Activated T-helper 1 cell treated with anti-CD3 and anti-CD28 coated beads, Interleukin-12 subunit alpha, Interleukin-12 subunit beta, Interleukin-2, Interleukin-4 antibody, amounts not matched to agents 30 ng/mL and 10 ng/mL and 1 ng/mL, durations not matched to agents 14 hours and 24 hours and 36 hours (primary cell): ENCODE measurements at regions of chr20 and their contacts with region 1.

Region 1: DNA sequence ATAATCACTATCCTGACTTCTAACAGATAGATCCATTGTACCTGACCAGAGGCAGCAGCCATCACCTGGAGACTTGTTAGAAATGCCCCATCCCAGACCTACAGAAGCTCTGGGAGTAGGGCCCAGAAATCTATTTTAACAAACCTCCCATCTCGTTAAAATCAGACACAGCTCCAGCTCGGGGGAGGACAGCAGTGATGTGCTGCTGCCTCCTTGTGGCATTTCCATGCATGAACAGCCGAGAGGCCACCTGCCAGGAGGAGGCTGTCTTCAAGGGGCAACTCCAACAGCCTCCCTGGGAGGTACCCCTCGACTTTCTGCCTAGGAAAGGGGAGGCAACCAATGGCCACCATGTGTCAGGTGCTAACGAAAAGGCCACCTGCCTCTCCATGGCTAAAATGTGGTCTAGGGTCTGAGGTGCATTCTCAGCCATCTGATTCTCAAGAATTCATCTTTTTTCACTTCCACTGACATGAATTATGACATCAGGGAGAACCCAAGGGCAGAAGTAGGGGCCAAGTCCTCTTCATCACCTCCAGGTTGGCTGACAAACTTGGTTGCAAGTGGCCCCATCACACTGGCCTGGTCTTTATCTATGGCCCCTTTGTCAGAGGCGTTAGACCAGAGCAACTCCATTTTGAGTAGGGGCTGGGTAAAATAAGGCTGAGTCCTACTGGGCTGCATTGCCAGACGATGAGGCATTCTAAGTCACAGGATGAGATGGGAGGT is 12.2 kb upstream of the KCNK15 start:
- DNase-seq: peak; percentile 45
- H3K4me3 Mint-ChIP-seq: no peak overlapping the region
- H3K27ac Mint-ChIP-seq: no peak overlapping the region
- H3K4me1 Mint-ChIP-seq: peaks cover 42% of the 10 kb centered on the region
- H3K27me3 Mint-ChIP-seq: peaks cover 2% of the 10 kb centered on the region

Region 2: GRCh38 chr20:44495802-44496481 is 237.6 kb before region 1 on chr20:
- intact Hi-C with region 1: no loop called
- DNase-seq: no peak
- H3K4me3 Mint-ChIP-seq: no peak overlapping the region
- H3K27ac Mint-ChIP-seq: peak overlapping the region; percentile 64
- H3K4me1 Mint-ChIP-seq: peaks cover 27% of the 10 kb centered on the region
- H3K27me3 Mint-ChIP-seq: no peaks in the 10 kb centered on the region

Region 3: GRCh38 chr20:44683263-44684046 is 50.0 kb before region 1 on chr20:
- intact Hi-C with region 1: loop called (anchors 1 kb)
- DNase-seq: peak; percentile 25
- H3K4me3 Mint-ChIP-seq: no peak overlapping the region
- H3K27ac Mint-ChIP-seq: no peak overlapping the region
- H3K4me1 Mint-ChIP-seq: peaks cover 17% of the 10 kb centered on the region
- H3K27me3 Mint-ChIP-seq: no peaks in the 10 kb centered on the region

Region 4: GRCh38 chr20:44747166-44748004 is 13.9 kb after region 1 on chr20:
- intact Hi-C with region 1: loop called (anchors 1 kb)
- DNase-seq: peak; percentile 34
- H3K4me3 Mint-ChIP-seq: peak overlapping the region; percentile 71
- H3K27ac Mint-ChIP-seq: peak overlapping the region; percentile 72
- H3K4me1 Mint-ChIP-seq: peaks cover 18% of the 10 kb centered on the region
- H3K27me3 Mint-ChIP-seq: peaks cover 26% of the 10 kb centered on the region